ENCODE measurements at regions of chr10 and their contacts with region 1.

Region 1: DNA sequence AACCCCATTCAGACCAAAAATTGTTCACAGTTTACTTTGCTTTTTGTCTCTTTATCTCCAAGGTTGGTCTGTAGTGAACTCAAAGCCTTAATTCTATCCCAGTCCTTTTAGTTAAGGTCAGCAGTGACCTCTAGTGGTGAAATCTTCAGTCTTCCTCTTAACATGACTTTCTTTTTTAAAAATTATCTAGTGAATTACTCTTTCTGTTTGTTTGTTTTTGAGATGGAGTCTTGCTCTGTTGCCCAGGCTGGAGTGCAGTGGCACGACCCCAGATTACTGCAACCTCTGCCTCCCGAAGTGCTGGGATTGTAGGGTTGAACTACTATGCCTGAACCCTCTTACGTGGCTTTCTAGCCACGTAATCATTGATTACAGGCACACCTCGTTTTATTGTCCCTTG is 25.0 kb downstream of the ZNF487 start:
- DNase-seq: no peak
- H3K4me3 Mint-ChIP-seq: no peak overlapping the region
- H3K27ac Mint-ChIP-seq: no peak overlapping the region
- H3K4me1 Mint-ChIP-seq: peaks cover 8% of the 10 kb centered on the region
- H3K27me3 Mint-ChIP-seq: no peaks in the 10 kb centered on the region

Region 2: DNA sequence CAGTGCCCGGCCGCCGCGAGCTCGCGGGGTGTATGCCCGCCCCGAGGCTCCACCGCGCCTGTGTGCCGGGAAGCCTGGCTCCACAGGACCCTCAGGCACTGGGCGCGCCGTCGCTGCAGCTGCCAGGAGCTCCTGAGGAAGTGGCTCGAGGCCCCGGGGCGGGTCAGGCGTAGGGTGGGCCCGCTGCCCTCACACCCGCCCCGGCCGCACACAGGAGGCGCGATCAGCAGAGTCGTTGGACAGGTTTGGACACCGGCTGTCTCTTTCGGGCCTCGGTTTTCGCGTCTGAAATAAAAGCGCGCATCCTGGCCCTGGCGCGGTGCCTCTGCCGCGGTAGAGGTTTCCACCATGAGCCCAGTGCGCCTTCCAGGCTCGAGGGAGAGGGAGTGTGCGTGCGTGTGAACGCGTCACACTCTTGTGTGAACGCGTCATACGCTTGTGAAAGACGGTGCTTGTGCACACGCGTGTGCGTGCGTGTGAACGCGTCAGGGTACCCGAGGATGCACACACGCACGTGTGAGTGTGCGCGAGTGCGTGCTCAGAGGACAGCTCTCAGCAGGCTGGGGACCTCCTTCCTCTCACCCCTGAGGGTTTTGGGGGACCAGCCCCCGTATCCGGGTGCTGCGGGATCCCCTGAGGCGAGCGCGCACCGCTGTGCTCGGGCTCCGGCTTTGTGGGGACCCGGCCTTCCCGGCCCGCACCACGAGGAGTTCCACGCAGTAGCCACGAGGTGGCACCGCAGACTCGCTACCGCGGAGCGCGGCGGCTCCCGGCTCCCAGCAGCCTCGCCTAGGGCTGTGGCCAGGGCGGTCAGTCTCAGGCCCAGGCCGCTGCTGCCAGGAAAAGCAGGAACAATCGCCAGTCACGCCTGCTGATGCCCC is 595.6 kb before region 1 on chr10:
- intact Hi-C with region 1: loop called (anchors 5 kb)
- DNase-seq: peak; percentile 31
- H3K4me3 Mint-ChIP-seq: no peak overlapping the region
- H3K27ac Mint-ChIP-seq: no peak overlapping the region
- H3K4me1 Mint-ChIP-seq: peaks cover 2% of the 10 kb centered on the region
- H3K27me3 Mint-ChIP-seq: peaks cover 39% of the 10 kb centered on the region

Region 3: DNA sequence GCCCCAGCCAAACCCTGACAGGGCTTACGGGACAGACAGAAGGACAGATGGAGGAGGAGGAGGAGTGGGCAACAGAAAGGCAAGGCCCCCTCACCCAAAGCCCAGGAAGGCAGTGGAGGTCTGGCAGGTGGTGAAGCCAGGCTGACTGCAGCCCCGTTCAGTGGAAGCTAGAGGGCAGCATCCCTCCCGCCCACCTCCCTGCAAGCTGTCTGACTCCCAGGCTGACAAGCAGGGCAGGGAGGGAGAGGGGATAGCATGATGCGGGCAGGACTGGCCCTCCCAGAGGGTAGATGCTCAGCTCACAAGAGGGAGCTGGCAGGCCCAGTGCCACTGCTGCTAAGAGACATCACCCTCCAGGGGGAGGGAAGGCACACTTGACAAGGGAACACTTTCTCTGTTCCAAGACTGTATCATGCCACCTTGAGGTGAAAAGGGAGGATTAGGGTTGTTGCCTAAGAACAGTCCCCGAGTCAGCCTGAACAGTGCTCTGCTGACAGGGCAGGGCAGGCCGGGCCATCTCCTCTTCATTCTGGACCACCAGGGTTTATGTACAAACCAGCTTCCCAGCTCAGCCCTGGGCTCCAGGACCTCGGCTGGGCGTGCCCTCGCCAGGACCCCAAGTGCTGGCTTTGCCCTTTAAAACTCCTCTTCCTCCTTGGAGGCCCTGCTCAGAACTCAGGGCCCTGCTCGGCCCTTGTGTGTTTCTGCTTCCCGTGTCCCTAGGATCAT is 256.8 kb before region 1 on chr10:
- intact Hi-C with region 1: loop called (anchors 1 kb)
- DNase-seq: peak; percentile 30
- H3K4me3 Mint-ChIP-seq: no peak overlapping the region
- H3K27ac Mint-ChIP-seq: no peak overlapping the region
- H3K4me1 Mint-ChIP-seq: peaks cover 7% of the 10 kb centered on the region
- H3K27me3 Mint-ChIP-seq: no peaks in the 10 kb centered on the region

Region 4: DNA sequence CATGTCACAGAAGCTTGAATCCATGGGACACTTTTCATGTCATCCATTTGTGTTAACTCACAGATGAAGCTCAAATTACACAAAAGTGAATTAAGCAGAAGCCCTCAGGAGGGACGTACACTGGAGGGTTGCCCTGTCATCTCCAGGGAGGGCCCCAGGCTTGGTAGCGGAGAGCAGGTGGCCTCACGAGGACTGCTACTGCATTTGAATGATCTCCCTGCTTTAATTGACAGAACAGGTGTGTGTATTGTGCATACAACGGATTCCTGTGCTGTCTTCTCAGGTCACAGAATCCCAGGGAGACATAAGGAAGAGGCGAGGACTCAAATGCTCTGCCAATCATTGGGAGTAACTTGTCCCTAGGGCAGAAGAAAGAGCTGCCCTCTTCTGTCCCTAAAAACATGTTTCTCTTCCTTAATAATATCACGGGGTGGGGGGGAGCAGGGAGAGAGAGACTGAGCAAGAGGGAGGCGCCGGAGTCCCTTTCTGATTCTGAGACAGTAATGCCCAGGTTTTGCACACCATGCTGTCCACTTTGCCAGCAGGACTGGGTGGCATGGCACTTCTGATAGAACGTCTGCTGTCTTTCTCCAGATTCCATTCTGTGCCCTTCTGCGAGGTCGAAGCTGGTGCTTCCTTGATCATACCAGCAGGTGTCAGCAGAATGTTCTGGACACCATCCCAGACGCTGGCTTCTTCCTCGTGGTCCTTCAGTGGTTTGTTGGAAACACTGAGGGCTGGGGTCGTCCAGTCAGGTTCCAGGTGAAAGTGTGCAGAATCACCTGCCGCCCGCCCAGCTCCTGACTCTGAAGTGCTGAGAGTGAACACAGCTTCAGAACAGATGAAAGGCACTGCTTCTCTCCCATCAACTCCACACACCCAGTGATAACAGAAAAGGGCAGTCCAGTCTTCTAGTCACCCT is 168.9 kb before region 1 on chr10:
- intact Hi-C with region 1: loop called (anchors 2 kb)
- DNase-seq: peak; percentile 37
- H3K4me3 Mint-ChIP-seq: peak overlapping the region; percentile 19
- H3K27ac Mint-ChIP-seq: peak overlapping the region; percentile 65
- H3K4me1 Mint-ChIP-seq: peaks cover 51% of the 10 kb centered on the region
- H3K27me3 Mint-ChIP-seq: peaks cover 10% of the 10 kb centered on the region

Measured in activated T-helper 2 cell treated with anti-CD3 and anti-CD28 coated beads, Interferon-gamma antibody, Interleukin-2, Interleukin-4, amounts not matched to agents 10 μg/mL and 5 μg/mL and 100 μg/mL, durations not matched to agents 14 hours and 24 hours and 36 hours (primary cell).